Right lobe of liver (tissue), 6 donors: ENCODE measurements at regions of chr19 and their contacts with region 1.

Region 1: GRCh38 chr19:5577785-5578493 is 10.2 kb upstream of the TINCR start:
- DNase-seq: peak; percentile 67 to 73 (median 69)
- ATAC-seq: peak; percentile 82 to 91 (median 89)
- H3K4me3 ChIP-seq: no peak overlapping the region
- H3K27ac ChIP-seq: no peak overlapping the region
- H3K4me1 ChIP-seq: peaks cover 0 to 4% (median 0%) of the 10 kb centered on the region in 4 donors
- H3K27me3 ChIP-seq: no peaks in the 10 kb centered on the region
- CTCF ChIP-seq: peak; percentile 90 to 99 (median 99)
- POLR2A ChIP-seq: no peak

Region 2: DNA sequence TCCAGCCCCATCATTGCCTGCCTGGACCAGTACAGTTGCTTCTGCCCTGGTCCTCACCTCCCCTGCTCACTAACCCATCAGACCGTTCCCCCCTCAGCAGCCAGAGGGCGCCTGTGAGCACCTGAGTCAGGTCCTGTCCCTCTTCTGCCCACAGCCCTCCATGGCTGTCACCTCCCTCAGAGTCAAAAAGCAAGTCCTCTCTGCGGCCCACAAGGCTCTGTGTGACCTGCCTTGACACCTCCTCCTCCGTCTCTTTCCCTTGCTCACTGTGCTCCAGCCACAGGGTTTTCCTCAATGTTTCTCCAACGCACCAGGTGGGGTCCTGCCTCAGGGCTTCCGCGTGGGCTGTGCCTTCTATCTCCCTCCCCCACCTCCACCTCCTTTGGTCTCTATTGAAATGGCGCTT is 208.0 kb before region 1 on chr19:
- intact Hi-C with region 1: loop called in 1 of 2 experiments (anchors 5 kb)
- DNase-seq: peak; percentile 56 to 67 (median 61)
- ATAC-seq: peak; percentile 67 to 79 (median 72)
- H3K4me3 ChIP-seq: no peak overlapping the region
- H3K27ac ChIP-seq: no peak overlapping the region
- H3K4me1 ChIP-seq: no peaks in the 10 kb centered on the region
- H3K27me3 ChIP-seq: no peaks in the 10 kb centered on the region
- CTCF ChIP-seq: peak; percentile 51 to 65 (median 61)
- POLR2A ChIP-seq: no peak

Region 3: DNA sequence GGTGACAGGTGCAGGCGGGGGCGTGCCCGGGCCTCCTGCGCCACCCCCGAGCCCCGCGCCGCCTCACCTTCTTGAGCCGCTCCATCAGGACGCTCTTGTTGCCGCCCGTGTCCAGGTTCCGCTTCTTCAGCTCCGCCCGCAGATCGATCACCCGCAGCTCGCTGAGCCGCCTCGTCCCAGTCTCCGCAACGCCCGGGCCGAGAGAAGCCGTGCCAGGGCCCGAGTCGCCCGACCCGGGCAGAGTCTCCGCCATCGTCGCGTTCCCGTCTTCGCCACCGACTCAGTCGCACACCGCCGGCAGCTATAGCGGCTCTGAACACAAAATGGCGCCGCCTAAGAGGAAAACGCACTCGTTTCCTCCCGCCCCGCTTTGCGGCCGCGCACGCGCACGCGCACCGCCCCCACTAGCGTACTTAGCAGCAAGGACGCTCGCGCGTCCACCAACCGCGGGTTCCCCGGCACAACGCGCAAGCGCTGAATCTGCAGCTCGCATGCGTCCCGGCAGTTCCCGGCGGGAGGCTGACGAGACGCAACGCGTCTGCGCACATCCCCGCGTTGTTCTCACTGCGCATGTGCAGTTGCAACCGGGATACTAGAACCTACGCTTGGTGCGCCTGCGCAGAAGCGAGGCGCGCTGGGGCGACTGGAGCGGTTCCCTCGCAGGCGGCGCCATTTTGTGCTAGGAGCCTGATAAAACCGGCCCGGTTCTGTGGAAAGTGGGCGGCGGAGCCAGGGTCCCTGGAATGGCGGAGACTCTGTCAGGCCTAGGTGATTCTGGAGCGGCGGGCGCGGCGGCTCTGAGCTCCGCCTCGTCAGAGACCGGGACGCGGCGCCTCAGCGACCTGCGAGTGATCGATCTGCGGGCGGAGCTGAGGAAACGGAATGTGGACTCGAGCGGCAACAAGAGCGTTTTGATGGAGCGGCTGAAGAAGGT is 44.8 kb after region 1 on chr19 and contains the starts of genes SAFB and SAFB2:
- intact Hi-C with region 1: no loop called
- DNase-seq: peak; percentile 99 to 100 (median 100)
- ATAC-seq: peak; percentile 91 to 94 (median 92)
- H3K4me3 ChIP-seq: peak within 1 kb of the TSS; percentile 95 to 100 (median 96)
- H3K27ac ChIP-seq: peak within 1 kb of the TSS; percentile 90 to 96 (median 95)
- H3K4me1 ChIP-seq: peaks cover 0 to 53% (median 18%) of the 10 kb centered on the region in 4 donors
- H3K27me3 ChIP-seq: no peaks in the 10 kb centered on the region
- CTCF ChIP-seq: no peak
- POLR2A ChIP-seq: peak; percentile 90
- total RNA-seq, gene SAFB: 31.2 to 45.7 (median 32.8) TPM
- total RNA-seq, gene SAFB2: 16.9 to 48.9 (median 41.7) TPM

Region 4: GRCh38 chr19:5690955-5691821 is 113.2 kb after region 1 on chr19:
- intact Hi-C with region 1: no loop called
- DNase-seq: peak in 2 of 3 donors; percentile 56 to 66
- ATAC-seq: peak in 1 of 4 donors; percentile 2
- H3K4me3 ChIP-seq: peak overlapping the region; percentile 70 to 89 (median 71)
- H3K27ac ChIP-seq: peak overlapping the region; percentile 69 to 85 (median 72)
- H3K4me1 ChIP-seq: peaks cover 0 to 10% (median under 1%) of the 10 kb centered on the region in 4 donors
- H3K27me3 ChIP-seq: no peaks in the 10 kb centered on the region
- CTCF ChIP-seq: no peak
- POLR2A ChIP-seq: no peak